ENCODE measurements at regions of chr14 and their contacts with region 1.

Region 1: DNA sequence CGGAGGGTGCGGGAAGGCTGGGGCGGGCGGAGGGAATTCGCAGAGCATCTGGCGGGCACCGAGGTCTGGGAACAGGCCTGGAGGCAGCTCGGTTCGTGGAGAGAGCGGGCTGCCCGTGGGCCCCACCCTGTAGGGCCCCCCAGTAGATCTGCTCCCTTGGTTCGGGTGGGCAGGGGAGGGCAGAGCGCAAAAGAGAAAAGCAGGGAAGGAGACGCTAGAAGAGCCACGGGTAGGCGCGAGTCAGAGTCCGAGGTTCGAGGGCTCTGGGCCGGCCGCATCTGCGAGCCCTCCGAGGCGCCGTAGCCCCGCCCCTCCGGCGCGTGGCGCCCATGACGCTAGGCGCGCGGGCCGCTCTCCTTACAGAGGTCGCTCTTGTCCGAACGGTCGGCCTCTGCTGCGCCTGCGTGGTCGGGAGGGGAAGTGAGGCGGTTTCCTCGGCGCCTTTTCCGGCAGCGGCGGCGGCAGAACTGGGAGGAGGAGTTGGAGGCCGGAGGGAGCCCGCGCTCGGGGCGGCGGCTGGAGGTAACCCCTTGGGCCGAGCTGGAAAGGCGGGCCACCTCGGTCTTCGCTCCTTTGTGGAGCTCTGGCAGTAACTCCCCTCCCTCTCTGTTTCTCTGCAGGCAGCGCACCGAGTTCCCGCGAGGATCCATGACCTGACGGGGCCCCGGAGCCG is at the start of gene ARF6:
- DNase-seq: peak; percentile 97
- H3K4me3 Mint-ChIP-seq: peak within 1 kb of the TSS; percentile 99
- H3K27ac Mint-ChIP-seq: peak within 1 kb of the TSS; percentile 100
- H3K4me1 Mint-ChIP-seq: peaks cover 19% of the 10 kb centered on the region
- H3K27me3 Mint-ChIP-seq: peaks cover 2% of the 10 kb centered on the region
- total RNA-seq, gene ARF6: 163 and 164 TPM in 2 replicates

Region 2: GRCh38 chr14:49767562-49768300 is 125.0 kb before region 1 on chr14 and contains the start of gene KLHDC2:
- intact Hi-C with region 1: loop called (anchors 2 kb)
- DNase-seq: peak; percentile 89
- H3K4me3 Mint-ChIP-seq: peak within 1 kb of the TSS; percentile 99
- H3K27ac Mint-ChIP-seq: peak within 1 kb of the TSS; percentile 100
- H3K4me1 Mint-ChIP-seq: peaks cover 33% of the 10 kb centered on the region
- H3K27me3 Mint-ChIP-seq: peaks cover 2% of the 10 kb centered on the region
- total RNA-seq, gene KLHDC2: 23.7 and 26.2 TPM in 2 replicates

Region 3: GRCh38 chr14:49867831-49868723 is 24.7 kb before region 1 on chr14:
- intact Hi-C with region 1: loop called (anchors 1 kb)
- DNase-seq: peak; percentile 92
- H3K4me3 Mint-ChIP-seq: peak overlapping the region; percentile 93
- H3K27ac Mint-ChIP-seq: peak overlapping the region; percentile 97
- H3K4me1 Mint-ChIP-seq: peaks cover 20% of the 10 kb centered on the region
- H3K27me3 Mint-ChIP-seq: no peaks in the 10 kb centered on the region

Region 4: DNA sequence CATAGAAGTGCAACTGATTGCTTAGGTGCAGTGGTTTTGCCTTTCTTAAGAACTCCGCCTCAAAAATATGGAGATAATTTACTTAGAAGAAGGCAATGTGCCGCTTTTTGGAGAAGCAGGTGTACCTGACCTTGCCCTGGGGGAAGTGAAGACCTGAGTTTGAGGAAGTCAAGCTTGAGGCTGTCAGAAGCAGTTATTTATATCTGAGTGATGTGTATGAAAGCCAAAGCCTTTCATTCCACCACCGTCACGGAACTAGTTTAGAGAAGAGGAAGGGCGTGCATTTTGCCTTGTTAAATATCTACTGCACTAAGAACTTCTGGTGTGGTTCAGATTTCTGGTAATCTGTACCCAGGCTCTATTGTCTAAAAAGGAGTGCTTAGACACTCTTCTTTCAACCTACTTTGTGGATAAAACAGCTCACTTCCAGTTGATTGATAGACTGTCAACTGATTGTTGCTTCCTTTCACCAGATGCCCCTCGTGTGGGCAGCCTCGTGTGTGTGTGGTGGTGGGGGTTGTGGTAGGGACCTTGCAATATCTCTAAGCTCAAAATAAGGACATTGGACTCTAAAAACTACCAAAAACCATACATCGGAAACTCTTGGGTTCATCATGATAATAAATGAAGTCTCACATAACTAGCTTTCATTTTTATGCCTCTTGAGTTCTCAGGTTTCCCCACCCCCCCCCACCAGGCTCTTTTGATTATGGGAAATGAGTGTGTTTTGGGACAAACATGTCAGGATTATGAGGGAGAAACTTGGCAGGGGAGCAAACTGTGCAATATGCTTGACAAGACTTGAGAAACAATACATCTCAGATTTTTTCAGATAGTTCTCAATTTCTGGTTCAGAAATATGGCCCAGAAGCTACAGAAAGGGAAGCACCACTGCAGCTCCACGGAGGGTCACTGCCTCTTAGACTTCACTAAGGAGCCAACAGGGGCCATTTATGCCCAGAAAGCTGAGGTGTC is 78.7 kb after region 1 on chr14:
- intact Hi-C with region 1: loop called (anchors 1 kb)
- DNase-seq: peak; percentile 48
- H3K4me3 Mint-ChIP-seq: peak overlapping the region; percentile 83
- H3K27ac Mint-ChIP-seq: peak overlapping the region; percentile 99
- H3K4me1 Mint-ChIP-seq: peaks cover 61% of the 10 kb centered on the region
- H3K27me3 Mint-ChIP-seq: no peaks in the 10 kb centered on the region

Region 5: DNA sequence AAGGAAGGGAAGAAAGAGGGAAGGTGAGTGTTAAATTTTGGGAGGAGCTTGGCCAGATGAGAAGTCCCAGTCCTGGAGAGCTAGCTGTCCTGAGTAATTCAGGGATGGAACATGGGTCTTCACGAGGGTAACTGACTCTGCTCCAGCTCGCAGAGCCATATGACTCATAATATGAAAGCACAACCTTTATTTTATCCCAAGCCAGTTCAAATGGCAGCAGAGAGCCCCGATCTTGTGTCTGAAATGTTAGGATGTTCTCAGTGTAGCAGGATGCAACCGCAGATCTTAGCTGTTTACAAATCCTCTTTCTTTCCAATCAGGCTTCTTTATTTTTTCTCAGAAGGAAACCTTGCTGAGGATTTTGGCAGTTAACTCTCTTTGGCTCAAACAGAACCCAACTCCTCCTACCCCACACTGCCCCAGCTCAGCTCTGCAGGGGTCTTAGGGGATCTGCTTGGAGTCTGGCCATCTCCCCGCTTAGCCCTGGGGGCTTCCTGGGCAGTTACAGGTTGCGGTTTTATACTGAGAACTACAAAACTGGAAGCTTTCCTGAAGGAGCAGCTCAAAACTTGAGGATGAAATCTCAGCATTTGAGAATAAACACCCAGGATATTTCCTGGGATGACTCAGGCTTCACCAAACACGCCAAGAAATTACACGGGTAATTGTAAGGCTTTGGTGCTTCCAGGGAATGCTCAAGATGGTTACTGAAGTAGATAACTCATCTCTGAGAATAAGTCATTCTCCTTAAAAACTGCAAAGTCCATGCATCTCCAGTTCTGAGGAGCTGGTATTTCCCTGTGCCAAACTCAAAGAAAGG is 131.1 kb after region 1 on chr14:
- intact Hi-C with region 1: no loop called
- DNase-seq: no peak
- H3K4me3 Mint-ChIP-seq: no peak overlapping the region
- H3K27ac Mint-ChIP-seq: no peak overlapping the region
- H3K4me1 Mint-ChIP-seq: peaks cover 35% of the 10 kb centered on the region
- H3K27me3 Mint-ChIP-seq: no peaks in the 10 kb centered on the region

Region 6: DNA sequence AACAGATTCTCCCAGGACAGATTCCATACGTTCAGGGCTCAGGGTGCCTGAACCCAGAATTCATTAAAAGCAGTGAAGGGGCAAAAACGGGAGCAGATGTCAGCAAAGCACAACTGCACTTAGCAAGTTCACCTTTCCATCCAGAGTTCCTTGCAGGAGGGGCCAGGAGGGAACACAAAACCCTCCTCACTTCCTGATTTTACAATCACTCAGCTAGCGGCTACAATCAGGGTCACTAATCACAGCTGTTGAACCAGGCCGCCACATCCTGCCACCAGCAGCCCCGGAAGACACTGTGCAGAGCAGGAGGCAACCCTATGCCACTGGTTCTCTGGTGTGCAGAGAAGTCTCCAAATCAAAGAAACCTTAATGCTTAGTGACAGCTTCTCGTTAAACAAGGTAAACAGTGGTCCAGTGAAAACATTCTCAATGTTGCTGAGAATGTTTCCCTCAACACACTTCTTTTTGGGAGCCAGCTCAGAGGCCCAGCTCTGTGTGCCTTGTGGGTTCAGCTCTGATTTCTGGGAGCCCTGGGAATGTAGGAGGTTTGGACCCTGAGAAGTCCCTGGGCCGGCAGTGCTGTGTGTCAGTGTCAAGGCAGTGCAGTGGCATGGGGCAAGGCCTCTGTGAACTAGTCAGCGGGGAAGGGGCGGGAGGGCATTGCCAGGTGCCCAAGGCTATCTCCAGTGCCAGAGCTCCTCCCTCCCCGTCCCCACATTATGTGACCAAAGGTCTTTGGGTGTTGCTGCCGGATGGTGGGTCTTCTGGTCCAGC is 169.1 kb after region 1 on chr14:
- intact Hi-C with region 1: loop called (anchors 1 kb)
- DNase-seq: peak; percentile 67
- H3K4me3 Mint-ChIP-seq: peak overlapping the region; percentile 99
- H3K27ac Mint-ChIP-seq: peak overlapping the region; percentile 100
- H3K4me1 Mint-ChIP-seq: peaks cover 94% of the 10 kb centered on the region
- H3K27me3 Mint-ChIP-seq: no peaks in the 10 kb centered on the region

Region 7: GRCh38 chr14:50109342-50109741 is 216.6 kb after region 1 on chr14:
- intact Hi-C with region 1: loop called (anchors 1 kb)
- DNase-seq: no peak
- H3K4me3 Mint-ChIP-seq: no peak overlapping the region
- H3K27ac Mint-ChIP-seq: no peak overlapping the region
- H3K4me1 Mint-ChIP-seq: peaks cover 28% of the 10 kb centered on the region
- H3K27me3 Mint-ChIP-seq: no peaks in the 10 kb centered on the region

Measured in activated T-helper 1 cell treated with anti-CD3 and anti-CD28 coated beads, Interleukin-12 subunit alpha, Interleukin-12 subunit beta, Interleukin-2, Interleukin-4 antibody, amounts not matched to agents 30 ng/mL and 10 ng/mL and 1 ng/mL, durations not matched to agents 14 hours and 24 hours and 36 hours (primary cell).